ENCODE measurements at regions of chr6 and their contacts with region 1.

Region 1: DNA sequence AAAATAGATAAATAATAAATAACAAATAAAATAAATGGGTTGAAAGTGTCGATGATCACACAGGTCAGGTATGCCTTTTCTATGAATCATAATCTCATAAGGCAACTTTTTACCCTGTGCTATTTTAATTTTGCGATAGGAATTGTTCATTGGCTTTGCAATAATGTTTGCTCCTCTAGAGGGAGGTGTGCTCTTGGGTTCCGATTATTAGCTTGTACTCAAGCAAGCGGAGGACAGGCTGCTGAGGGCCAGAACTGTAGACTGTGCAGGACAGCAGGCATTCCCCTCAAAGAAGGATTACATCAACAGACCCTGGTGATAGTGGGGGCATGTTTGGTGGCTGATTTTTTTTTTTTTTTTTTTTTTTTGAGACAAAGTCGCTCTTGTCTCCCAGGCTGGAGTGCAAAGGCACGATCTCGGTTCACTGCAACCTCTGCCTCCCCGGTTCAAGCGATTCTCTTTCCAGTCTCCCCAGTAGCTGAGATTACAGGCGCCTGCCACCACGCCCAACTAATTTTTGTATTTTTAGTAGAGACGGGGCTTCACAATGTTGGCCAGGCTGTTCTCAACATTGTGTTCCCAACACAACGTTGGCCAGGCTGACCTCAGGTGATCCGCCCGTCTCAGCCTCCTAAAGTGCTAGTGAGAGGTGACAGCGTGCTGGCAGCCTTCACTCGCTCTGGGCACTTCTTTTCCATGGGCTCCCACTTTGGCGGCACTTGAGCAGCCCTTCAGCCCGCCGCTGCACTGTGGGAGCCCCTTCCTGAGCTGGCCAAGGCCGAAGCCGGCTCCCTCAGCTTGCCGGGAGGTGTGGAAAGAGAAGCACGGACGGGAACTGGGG is 35.6 kb downstream of the RIOK1 start:
- DNase-seq: peak; percentile 77
- ATAC-seq: peak; percentile 95
- H3K4me3 ChIP-seq: no peak overlapping the region
- H3K27ac ChIP-seq: no peak overlapping the region
- H3K4me1 ChIP-seq: no peaks in the 10 kb centered on the region
- H3K27me3 ChIP-seq: no peaks in the 10 kb centered on the region
- CTCF ChIP-seq: peak; percentile 72

Region 2: GRCh38 chr6:7604506-7604905 is 179.3 kb after region 1 on chr6:
- CTCF ChIA-PET with region 1: interaction called, 4 read pairs
- POLR2A ChIA-PET with region 1: no interaction called
- intact Hi-C with region 1: loop called (anchors 5 kb)
- DNase-seq: no peak
- ATAC-seq: no peak
- H3K4me3 ChIP-seq: no peak overlapping the region
- H3K27ac ChIP-seq: no peak overlapping the region
- H3K4me1 ChIP-seq: no peaks in the 10 kb centered on the region; the same call in 1 of the 2 replicates
- H3K27me3 ChIP-seq: no peaks in the 10 kb centered on the region
- CTCF ChIP-seq: no peak

Measured in PC-3 (cell line).